Activated CD8-positive, alpha-beta memory T cell treated with anti-CD3 and anti-CD28 coated beads, Interleukin-2, amount 10 ng/mL, durations not matched to agents 7 days and 5 days (primary cell): ENCODE measurements at regions of chr11 and their contacts with region 1.

Region 1: GRCh38 chr11:1852877-1853276 is at the start of gene LSP1:
- DNase-seq: peak; percentile 95
- ATAC-seq: peak; percentile 59
- H3K4me3 Mint-ChIP-seq: peak within 1 kb of the TSS; percentile 99
- H3K27ac Mint-ChIP-seq: peak within 1 kb of the TSS; percentile 99
- H3K4me1 Mint-ChIP-seq: peaks cover 55% of the 10 kb centered on the region
- H3K27me3 Mint-ChIP-seq: no peaks in the 10 kb centered on the region
- total RNA-seq, gene LSP1: 574 to 702 TPM

Region 2: GRCh38 chr11:1837171-1838076 is 15.5 kb before region 1 on chr11:
- CTCF ChIA-PET with region 1: interaction called, 23 read pairs
- DNase-seq: peak; percentile 92
- ATAC-seq: peak; percentile 91
- H3K4me3 Mint-ChIP-seq: no peak overlapping the region
- H3K27ac Mint-ChIP-seq: no peak overlapping the region
- H3K4me1 Mint-ChIP-seq: peaks cover 8% of the 10 kb centered on the region
- H3K27me3 Mint-ChIP-seq: peaks cover 7% of the 10 kb centered on the region

Region 3: DNA sequence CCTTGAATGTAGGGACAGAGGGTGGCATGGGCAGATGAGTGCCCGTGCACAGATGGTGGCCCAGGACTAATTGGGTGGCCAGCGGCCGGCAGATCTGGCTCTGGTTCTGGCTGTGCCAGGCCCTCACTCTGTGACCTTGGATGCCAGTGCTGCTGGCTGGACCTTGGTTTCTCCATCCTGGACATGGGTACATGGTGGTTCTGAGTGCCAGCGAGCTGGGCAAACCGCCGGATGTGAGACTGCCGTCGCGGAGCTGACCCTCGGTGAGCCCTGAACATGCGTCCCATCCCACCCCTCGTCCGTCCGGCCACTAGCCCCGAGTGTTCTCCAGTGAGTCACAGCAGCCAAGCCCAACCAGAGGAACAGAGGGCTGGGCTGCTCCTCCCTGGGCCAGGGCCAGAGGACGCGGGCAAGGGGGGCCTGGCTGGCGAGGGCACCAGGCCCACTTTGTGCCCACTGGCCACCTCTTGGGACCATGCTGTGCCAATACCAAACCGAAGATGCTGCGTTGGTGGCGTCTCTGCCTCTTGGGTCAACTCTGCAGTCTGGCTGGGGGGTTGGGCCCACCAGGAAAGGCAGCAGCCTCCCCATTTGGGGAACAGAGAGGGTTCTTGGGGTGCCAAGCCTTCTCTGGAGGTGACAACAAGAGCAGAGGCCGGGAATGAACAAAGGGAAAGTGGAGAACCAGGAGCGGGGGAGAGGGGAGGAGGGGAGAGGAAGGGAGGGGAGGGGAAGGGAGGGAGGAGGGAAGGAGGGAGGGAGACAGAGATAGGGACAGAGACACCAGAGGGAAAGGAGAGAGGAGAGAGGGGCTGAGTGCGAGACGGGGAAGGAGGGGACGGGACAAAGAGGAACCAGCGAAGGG is 10.7 kb after region 1 on chr11:
- CTCF ChIA-PET with region 1: no interaction called
- DNase-seq: no peak
- ATAC-seq: no peak
- H3K4me3 Mint-ChIP-seq: no peak overlapping the region
- H3K27ac Mint-ChIP-seq: no peak overlapping the region
- H3K4me1 Mint-ChIP-seq: peaks cover 11% of the 10 kb centered on the region
- H3K27me3 Mint-ChIP-seq: no peaks in the 10 kb centered on the region

Region 4: GRCh38 chr11:1946812-1947484 is 94.1 kb after region 1 on chr11 and contains the start of gene MRPL23:
- CTCF ChIA-PET with region 1: interaction called, 13 read pairs
- DNase-seq: no peak
- ATAC-seq: peak; percentile 81
- H3K4me3 Mint-ChIP-seq: no peak within 1 kb of the TSS
- H3K27ac Mint-ChIP-seq: no peak within 1 kb of the TSS
- H3K4me1 Mint-ChIP-seq: no peaks in the 10 kb centered on the region
- H3K27me3 Mint-ChIP-seq: no peaks in the 10 kb centered on the region
- total RNA-seq, gene MRPL23: 109 to 114 TPM